Posterior cingulate gyrus (tissue), 11 donors: ENCODE measurements at regions of chr14 and their contacts with region 1.

Region 1: GRCh38 chr14:31026395-31027118 is 378 bp upstream of the STRN3 start:
- DNase-seq: peak; percentile 96 to 99 (median 97)

Region 2: GRCh38 chr14:31207755-31208545 is 181.4 kb after region 1 on chr14 and contains the start of gene HECTD1:
- intact Hi-C with region 1: loop called (anchors 5 kb)
- DNase-seq: peak; percentile 70 to 97 (median 83)